ENCODE measurements at regions of chr18 and their contacts with region 1.

Region 1: DNA sequence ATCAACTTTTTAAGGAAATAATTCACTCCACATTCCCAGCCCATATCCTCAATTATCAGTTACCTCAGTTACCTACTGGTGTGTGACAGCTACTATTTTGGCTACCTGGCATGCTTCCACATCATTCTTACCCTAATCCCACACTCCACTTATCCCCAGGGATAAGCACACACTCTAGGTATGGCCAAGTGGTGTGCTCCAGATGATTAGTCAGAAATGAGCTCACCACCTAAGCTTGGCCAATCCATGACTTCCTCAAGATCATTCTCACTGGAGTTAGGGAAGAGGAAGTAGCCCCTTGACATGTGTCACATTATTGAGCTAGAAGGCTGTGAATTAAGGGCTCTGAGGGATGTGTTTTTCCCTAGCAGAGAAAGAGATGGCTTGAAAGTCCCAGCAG is 20.9 kb upstream of the SMAD4 start:
- DNase-seq: no peak
- H3K4me3 ChIP-seq: no peak overlapping the region
- CTCF ChIP-seq: no peak

Region 2: DNA sequence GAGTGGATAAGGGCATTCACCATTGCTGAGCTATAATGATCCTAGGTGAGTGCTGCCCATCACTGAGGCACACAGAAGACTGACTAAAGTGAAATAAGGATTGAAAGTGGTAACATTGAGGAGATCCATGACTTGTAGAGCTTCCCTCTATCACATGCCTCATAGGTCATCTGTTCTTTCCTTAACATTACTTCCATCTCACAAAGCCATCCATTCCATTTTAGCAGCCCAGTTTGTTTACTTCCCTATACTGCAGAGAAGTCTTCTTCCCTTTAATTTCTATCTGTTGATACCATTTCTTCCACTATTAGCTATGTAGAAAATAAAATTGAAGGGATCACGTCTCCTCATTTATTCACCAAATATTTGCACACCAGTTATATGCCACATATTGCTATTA is 98.1 kb before region 1 on chr18:
- in situ Hi-C with region 1: loop called (anchors 5 kb)
- DNase-seq: no peak
- H3K4me3 ChIP-seq: no peak overlapping the region
- CTCF ChIP-seq: no peak

Region 3: GRCh38 chr18:50973367-50974126 is 35.5 kb before region 1 on chr18:
- in situ Hi-C with region 1: no loop called
- DNase-seq: no peak
- H3K4me3 ChIP-seq: no peak overlapping the region
- CTCF ChIP-seq: no peak

Measured in astrocyte of the cerebellum (primary cell).